Mammary epithelial cell (primary cell): ENCODE measurements at regions of chr5 and their contacts with region 1.

Region 1: DNA sequence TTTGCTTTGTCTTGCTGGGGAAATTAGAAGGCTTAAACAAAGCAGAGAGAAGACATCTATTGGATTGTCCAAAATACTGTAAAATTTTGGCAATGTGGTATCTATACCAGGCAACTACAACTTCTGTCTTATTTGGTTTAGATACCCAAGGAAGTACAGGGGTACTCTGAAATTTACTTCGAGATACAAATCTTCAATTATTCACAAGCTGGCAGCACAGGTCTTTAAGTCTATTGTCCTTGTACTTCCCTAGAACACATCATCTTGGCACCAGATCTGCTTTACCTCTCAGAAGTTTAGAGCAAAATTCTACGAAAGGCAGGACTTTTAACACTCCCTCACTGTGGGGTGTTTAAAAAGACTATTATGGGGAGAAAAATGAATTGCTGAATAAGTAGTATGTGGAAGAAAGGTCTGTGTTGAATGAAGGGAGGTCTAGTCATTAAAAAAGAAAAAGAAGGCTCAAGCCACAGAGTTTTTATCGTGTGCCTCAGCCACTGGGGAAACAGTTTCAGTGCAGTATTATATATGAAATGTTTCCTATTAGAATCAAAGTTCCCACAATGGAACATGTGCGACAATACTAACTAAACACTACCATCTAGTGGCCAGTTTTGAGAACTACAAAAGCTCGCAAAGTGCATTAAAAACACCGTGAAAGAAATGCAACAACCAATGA is 93.7 kb downstream of the PDE4D start:
- DNase-seq: peak; percentile 61
- H3K4me3 ChIP-seq: no peak overlapping the region
- H3K27ac ChIP-seq: peak overlapping the region; percentile 21
- H3K4me1 ChIP-seq: peaks cover 13% of the 10 kb centered on the region
- H3K27me3 ChIP-seq: no peaks in the 10 kb centered on the region
- CTCF ChIP-seq: peak; percentile 56 to 62

Region 2: GRCh38 chr5:59380350-59380951 is 419.4 kb before region 1 on chr5:
- CTCF ChIA-PET with region 1: no interaction called
- dilution Hi-C with region 1: no loop called
- in situ Hi-C with region 1: loop called (anchors 10 kb)
- intact Hi-C with region 1: loop called (anchors 2 kb)
- DNase-seq: peak; percentile 71
- H3K4me3 ChIP-seq: no peak overlapping the region
- H3K27ac ChIP-seq: no peak overlapping the region
- H3K4me1 ChIP-seq: peaks cover 2% of the 10 kb centered on the region
- H3K27me3 ChIP-seq: no peaks in the 10 kb centered on the region
- CTCF ChIP-seq: peak; percentile 47 to 50

Region 3: GRCh38 chr5:59496524-59497134 is 303.2 kb before region 1 on chr5:
- CTCF ChIA-PET with region 1: no interaction called
- dilution Hi-C with region 1: no loop called
- in situ Hi-C with region 1: loop called in 1 of 2 experiments (anchors 10 kb)
- intact Hi-C with region 1: no loop called
- DNase-seq: no peak
- H3K4me3 ChIP-seq: no peak overlapping the region
- H3K27ac ChIP-seq: no peak overlapping the region
- H3K4me1 ChIP-seq: no peaks in the 10 kb centered on the region
- H3K27me3 ChIP-seq: no peaks in the 10 kb centered on the region
- CTCF ChIP-seq: peak; percentile 62 to 70

Region 4: DNA sequence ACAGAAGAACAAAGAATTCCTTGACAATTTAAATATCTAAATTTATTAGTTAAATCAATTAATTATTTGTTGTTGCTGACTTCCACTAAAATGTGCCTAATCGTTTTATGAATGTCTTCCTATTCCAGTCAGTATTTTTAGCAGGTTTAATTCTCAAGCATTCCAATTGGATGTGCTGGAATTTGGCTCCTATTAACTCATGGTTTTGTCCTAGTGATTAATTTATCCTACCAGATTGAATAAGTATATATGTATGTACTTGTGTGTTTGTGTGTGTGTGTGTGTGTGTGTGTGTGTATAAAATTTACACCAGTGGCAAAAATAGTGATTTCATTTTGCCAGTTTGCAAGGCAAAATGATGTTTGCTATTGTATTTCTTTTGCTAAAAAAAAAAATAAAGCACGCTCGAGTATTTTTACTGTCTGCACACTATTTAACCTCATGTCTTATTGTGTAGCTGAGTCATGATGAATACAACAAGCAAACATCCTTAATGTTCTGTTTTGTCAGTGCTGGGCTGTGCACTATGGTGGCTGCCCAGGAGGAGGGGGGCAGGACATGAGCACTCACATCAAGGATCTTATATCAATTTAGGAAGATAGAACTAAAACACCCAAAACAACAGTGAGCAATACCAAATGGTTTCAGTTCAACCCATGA is 281.8 kb before region 1 on chr5:
- CTCF ChIA-PET with region 1: no interaction called
- dilution Hi-C with region 1: no loop called
- in situ Hi-C with region 1: loop called in 1 of 2 experiments (anchors 10 kb)
- intact Hi-C with region 1: no loop called
- DNase-seq: peak; percentile 61
- H3K4me3 ChIP-seq: no peak overlapping the region
- H3K27ac ChIP-seq: peak overlapping the region; percentile 20
- H3K4me1 ChIP-seq: peaks cover 19% of the 10 kb centered on the region
- H3K27me3 ChIP-seq: no peaks in the 10 kb centered on the region
- CTCF ChIP-seq: no peak

Region 5: DNA sequence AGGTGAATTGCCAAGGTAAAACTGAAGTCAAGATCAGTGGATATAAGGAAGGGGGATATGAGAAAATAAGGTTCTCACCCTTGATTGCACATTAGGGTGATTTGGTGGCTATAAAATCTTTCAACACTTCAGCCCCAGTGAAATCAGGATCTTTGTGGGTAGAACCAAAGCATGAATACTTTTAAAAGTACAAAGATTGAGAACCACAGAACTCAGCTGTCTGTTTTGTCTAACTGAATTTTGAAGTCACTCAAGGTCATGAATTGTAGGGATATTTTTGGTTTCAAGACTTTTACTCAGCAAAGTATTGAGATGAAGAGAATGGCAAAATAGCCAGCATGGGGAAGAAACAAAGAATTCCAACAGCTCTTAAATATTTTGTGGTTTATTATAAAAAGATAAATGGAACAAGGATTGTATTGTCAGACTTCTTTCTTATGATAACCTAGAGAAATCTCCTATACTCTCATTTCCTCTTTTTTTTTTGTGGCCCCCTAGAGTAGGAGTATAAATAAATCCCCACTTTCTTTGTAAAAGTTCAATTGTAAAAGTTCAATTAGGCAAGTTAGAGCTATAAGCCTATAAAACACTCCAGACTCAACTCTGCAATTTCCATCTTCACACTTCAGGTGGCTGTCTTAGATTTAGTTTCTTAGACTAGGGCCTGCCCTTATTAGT is 179.1 kb before region 1 on chr5:
- CTCF ChIA-PET with region 1: no interaction called
- dilution Hi-C with region 1: no loop called
- in situ Hi-C with region 1: no loop called
- intact Hi-C with region 1: no loop called
- DNase-seq: no peak
- H3K4me3 ChIP-seq: no peak overlapping the region
- H3K27ac ChIP-seq: no peak overlapping the region
- H3K4me1 ChIP-seq: no peaks in the 10 kb centered on the region
- H3K27me3 ChIP-seq: no peaks in the 10 kb centered on the region
- CTCF ChIP-seq: no peak

Region 6: DNA sequence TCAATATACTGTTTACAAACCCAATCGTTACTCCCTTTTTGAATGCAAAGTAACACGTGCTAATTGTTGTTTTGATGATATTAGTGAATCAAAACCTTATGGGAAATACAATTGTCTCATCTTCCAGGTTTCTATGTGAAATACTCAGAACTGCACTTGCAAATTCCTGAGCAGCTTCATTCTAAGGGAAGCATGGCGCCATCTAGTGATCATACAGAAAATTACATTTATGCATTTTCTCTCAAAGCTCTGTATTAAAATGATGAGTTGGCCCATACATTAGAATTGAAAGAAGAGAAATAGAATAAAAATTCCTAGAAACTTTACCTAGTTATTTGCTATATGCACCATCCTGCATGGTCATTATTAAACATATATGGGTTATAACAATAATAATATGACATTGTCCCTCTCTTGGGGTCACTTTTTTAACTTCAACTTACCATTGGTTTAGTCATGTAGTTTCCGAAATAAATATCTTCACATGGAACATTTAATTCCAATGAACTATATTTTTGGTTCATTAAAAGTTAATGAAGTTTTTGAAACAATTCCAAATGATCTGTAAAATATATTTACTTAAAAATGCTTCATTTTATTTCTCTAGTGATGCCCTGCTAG is 126.3 kb before region 1 on chr5:
- CTCF ChIA-PET with region 1: no interaction called
- dilution Hi-C with region 1: no loop called
- in situ Hi-C with region 1: no loop called
- intact Hi-C with region 1: loop called (anchors 1 kb)
- DNase-seq: peak; percentile 37
- H3K4me3 ChIP-seq: no peak overlapping the region
- H3K27ac ChIP-seq: no peak overlapping the region
- H3K4me1 ChIP-seq: no peaks in the 10 kb centered on the region
- H3K27me3 ChIP-seq: no peaks in the 10 kb centered on the region
- CTCF ChIP-seq: peak; percentile 58 to 67

Region 7: DNA sequence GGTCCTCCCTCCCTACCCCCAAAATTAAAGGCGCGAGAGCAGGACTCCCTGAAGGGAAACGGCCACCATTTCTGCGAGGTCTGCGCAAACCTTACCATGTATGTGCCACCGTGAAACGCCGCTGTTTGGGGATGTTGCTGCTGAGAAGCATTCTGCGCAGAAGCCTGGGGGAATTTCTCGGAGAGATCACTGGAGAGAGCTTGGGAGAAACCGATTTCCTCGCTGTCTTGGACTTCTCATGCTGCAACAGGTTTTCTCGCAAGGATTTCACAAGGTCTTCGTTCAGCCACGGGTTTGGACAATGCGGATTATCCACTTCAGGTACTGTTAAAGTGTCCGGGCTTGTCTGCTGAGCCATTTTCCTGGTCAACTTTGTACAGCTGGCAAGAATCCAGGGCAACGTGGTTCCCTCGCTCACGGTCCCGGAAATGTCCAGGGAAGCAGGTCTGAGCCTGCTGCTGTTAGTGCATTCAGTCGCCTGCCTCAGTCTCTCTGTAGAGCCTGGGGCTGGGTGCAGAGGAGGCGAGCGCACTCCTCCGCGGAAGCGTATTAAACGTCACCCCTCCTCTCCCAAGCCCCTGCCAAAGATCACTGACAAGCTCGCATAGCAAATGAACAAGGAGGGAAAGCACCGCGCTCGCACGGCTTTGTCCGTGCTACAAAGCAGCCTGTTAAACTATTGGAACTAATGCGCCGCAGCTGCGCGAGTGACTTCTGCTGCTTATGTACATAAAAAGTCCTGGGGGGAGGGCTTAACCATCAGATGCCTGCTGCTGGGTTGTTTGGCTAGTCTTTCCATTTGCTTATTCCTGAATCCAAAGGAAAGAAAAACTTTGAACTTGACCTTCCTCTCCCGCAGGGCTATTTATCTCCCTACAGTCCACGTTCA is 31.4 kb before region 1 on chr5:
- CTCF ChIA-PET with region 1: no interaction called
- dilution Hi-C with region 1: no loop called
- in situ Hi-C with region 1: no loop called
- intact Hi-C with region 1: loop called (anchors 1 kb)
- DNase-seq: peak; percentile 81
- H3K4me3 ChIP-seq: peak overlapping the region; percentile 64 to 75 (median 72)
- H3K27ac ChIP-seq: peak overlapping the region; percentile 97
- H3K4me1 ChIP-seq: peaks cover 35% of the 10 kb centered on the region
- H3K27me3 ChIP-seq: no peaks in the 10 kb centered on the region
- CTCF ChIP-seq: no peak